ENCODE measurements at regions of chr19 and their contacts with region 1.

Region 1: DNA sequence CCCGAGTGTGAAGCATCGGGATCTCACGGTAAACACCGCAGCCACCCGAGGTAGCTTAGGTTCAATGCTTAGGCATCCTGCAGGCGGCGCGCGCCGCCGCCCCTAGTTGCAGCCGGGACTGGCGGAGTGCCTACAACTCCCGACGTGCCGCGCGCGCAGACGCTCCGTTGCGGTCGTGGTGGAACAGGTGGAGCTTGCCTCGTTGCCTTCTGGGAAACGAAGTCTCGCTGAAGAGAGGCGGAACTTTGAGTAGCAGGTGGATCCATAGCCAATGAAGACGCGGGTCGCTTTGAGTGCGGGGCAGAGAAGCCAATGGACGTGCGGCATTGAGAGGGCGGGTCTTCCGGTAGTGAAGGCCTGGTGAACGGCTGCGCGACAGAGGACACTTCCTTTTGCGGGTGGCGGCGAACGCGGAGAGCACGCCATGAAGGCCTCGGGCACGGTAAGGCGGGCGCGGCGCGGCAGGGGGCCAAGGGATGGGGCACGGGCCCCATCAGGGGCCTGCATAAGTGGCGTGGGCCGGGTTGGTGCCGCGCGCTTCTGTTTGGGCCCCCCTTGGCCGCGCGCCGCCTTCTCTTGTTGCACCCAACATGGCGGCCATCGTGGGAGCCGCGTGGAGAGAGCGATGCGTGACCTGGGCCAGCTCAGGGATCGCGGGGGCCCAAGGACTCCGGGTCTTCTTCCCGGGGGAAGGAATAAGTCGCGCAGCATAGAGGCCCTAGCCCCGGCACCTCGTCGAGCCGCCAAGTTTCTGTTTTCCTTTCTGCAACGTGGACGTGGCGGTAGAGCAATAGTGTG is at the start of gene RPL18A:
- DNase-seq: peak; percentile 99
- ATAC-seq: peak; percentile 93
- H3K4me3 ChIP-seq: peak within 1 kb of the TSS; percentile 92
- H3K27ac ChIP-seq: peak within 1 kb of the TSS; percentile 90
- H3K4me1 ChIP-seq: peaks cover 12% of the 10 kb centered on the region
- H3K27me3 ChIP-seq: no peaks in the 10 kb centered on the region
- CTCF ChIP-seq: peak; percentile 93 to 99 (median 98); a peak in 5 of 6 replicates
- EP300 ChIP-seq: no peak
- POLR2A ChIP-seq: peak; percentile 100
- RAD21 ChIP-seq: peak; percentile 82
- polyA plus RNA-seq, gene RPL18A: 1,658 to 1,675 TPM

Region 2: GRCh38 chr19:17703824-17704463 is 155.8 kb before region 1 on chr19:
- CTCF ChIA-PET with region 1: interaction called, 43 read pairs
- POLR2A ChIA-PET with region 1: no interaction called
- RAD21 ChIA-PET with region 1: interaction called, 8 read pairs
- SMC1A ChIA-PET with region 1: interaction called, 19 read pairs
- in situ Hi-C with region 1: loop called (anchors 5 kb)
- intact Hi-C with region 1: loop called (anchors 1 kb)
- DNase-seq: no peak
- ATAC-seq: peak; percentile 93
- H3K4me3 ChIP-seq: no peak overlapping the region
- H3K27ac ChIP-seq: no peak overlapping the region
- H3K4me1 ChIP-seq: no peaks in the 10 kb centered on the region
- H3K27me3 ChIP-seq: no peaks in the 10 kb centered on the region; a peak in 1 of 4 replicates
- CTCF ChIP-seq: peak; percentile 82 to 93 (median 88)
- EP300 ChIP-seq: no peak
- POLR2A ChIP-seq: no peak
- RAD21 ChIP-seq: peak; percentile 80

Region 3: GRCh38 chr19:17775245-17775916 is 84.4 kb before region 1 on chr19:
- CTCF ChIA-PET with region 1: interaction called, 3 read pairs
- POLR2A ChIA-PET with region 1: no interaction called
- RAD21 ChIA-PET with region 1: interaction called, 9 read pairs
- SMC1A ChIA-PET with region 1: interaction called, 5 read pairs
- in situ Hi-C with region 1: no loop called
- intact Hi-C with region 1: loop called (anchors 5 kb)
- DNase-seq: no peak
- ATAC-seq: 0 out of 3 replicates have a peak, but pooled peaks have one; percentile 7
- H3K4me3 ChIP-seq: no peak overlapping the region
- H3K27ac ChIP-seq: peak overlapping the region; percentile 76
- H3K4me1 ChIP-seq: peaks cover 20% of the 10 kb centered on the region
- H3K27me3 ChIP-seq: no peaks in the 10 kb centered on the region
- CTCF ChIP-seq: peak; percentile 48 to 71 (median 64)
- EP300 ChIP-seq: no peak
- POLR2A ChIP-seq: no peak; the same call in 1 of the 2 replicates
- RAD21 ChIP-seq: peak; percentile 60

Region 4: GRCh38 chr19:17826583-17826982 is 33.1 kb before region 1 on chr19:
- CTCF ChIA-PET with region 1: no interaction called
- POLR2A ChIA-PET with region 1: no interaction called
- RAD21 ChIA-PET with region 1: no interaction called
- SMC1A ChIA-PET with region 1: no interaction called
- in situ Hi-C with region 1: no loop called
- intact Hi-C with region 1: no loop called
- DNase-seq: no peak
- ATAC-seq: no peak
- H3K4me3 ChIP-seq: no peak overlapping the region
- H3K27ac ChIP-seq: no peak overlapping the region
- H3K4me1 ChIP-seq: no peaks in the 10 kb centered on the region
- H3K27me3 ChIP-seq: no peaks in the 10 kb centered on the region
- CTCF ChIP-seq: no peak
- EP300 ChIP-seq: no peak
- POLR2A ChIP-seq: no peak
- RAD21 ChIP-seq: no peak

Region 5: DNA sequence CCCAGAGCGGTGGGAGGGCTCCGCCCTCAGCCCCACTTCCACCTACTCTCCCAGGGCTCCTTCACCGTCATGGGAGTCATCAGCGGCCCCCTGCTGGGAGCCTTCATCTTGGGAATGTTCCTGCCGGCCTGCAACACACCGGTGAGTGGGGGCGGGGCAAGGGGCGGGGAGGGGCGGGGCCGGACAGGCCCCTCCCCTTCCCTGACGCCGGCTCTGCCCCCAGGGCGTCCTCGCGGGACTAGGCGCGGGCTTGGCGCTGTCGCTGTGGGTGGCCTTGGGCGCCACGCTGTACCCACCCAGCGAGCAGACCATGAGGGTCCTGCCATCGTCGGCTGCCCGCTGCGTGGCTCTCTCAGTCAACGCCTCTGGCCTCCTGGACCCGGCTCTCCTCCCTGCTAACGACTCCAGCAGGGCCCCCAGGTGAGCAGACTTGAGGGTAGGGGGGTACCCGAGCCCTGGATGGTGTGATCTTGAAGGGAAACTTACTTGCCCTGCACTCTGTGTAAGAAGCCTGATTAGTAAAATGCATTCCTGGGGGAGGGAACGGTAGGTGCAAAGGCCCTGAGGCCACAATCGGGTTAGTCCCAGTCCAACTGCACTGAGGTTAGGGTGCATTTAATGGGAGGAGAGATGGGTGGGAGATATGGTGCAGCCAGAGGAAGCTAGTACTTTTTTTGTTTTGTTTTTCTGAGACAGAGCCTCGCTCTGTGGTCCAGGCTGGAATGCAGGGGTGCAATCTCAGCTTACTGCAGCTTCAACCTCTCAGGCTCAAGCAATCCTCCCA is 24.1 kb after region 1 on chr19:
- CTCF ChIA-PET with region 1: interaction called, 5 read pairs
- POLR2A ChIA-PET with region 1: interaction called, 3 read pairs
- RAD21 ChIA-PET with region 1: interaction called, 10 read pairs
- SMC1A ChIA-PET with region 1: no interaction called
- in situ Hi-C with region 1: no loop called
- intact Hi-C with region 1: no loop called
- DNase-seq: no peak
- ATAC-seq: no peak
- H3K4me3 ChIP-seq: no peak overlapping the region
- H3K27ac ChIP-seq: peak overlapping the region; percentile 50
- H3K4me1 ChIP-seq: peaks cover 32% of the 10 kb centered on the region
- H3K27me3 ChIP-seq: no peaks in the 10 kb centered on the region; a peak in 1 of 4 replicates
- CTCF ChIP-seq: no peak
- EP300 ChIP-seq: no peak
- POLR2A ChIP-seq: no peak
- RAD21 ChIP-seq: no peak

Region 6: GRCh38 chr19:17938092-17938845 is 78.5 kb after region 1 on chr19:
- CTCF ChIA-PET with region 1: interaction called, 251 read pairs
- POLR2A ChIA-PET with region 1: interaction called, 65 read pairs
- RAD21 ChIA-PET with region 1: interaction called, 228 read pairs
- SMC1A ChIA-PET with region 1: interaction called, 137 read pairs
- in situ Hi-C with region 1: no loop called
- intact Hi-C with region 1: no loop called
- DNase-seq: no peak
- ATAC-seq: peak; percentile 99
- H3K4me3 ChIP-seq: no peak overlapping the region
- H3K27ac ChIP-seq: no peak overlapping the region
- H3K4me1 ChIP-seq: no peaks in the 10 kb centered on the region; the same call in 1 of the 2 replicates
- H3K27me3 ChIP-seq: no peaks in the 10 kb centered on the region
- CTCF ChIP-seq: peak; percentile 95 to 98 (median 96)
- EP300 ChIP-seq: no peak
- POLR2A ChIP-seq: no peak
- RAD21 ChIP-seq: peak; percentile 94

Region 7: DNA sequence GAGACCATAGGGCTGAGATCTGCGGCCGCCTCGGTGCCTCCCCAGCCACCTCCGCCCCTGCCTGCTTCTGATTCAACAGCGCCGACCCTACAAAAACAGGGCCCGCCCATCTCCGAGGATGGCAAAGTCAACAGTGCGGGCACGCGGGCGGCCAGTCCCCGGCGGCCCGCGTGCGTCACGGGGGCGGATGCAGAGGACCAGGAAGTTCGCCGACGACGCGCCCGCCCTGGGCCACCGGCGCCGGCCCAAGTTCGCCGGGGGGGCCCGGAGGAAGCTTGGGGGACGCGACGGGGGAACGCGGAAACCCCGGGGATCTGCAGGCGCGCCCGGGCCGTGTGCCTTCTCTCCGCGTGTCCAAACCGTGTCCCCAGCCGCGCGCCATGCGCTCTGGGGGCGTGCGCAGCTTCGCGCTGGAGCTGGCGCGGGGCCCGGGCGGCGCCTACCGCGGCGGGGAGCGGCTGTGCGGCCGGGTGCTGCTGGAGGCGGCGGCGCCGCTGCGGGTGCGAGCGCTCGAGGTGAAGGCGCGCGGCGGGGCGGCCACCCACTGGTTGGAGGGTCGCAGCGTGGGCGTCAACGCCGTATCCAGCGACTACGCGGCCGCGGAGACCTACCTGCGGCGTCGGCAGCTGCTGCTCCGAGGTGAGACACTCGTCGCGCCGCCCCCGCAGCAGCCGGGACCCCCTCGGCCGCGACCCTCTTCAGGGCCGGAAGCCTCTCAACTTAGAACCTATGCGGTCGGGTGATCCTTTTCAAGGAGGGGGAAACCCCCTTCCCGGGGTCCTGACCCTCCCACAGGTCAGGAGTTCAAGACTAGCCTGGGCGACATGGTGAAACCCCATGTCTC is 141.4 kb after region 1 on chr19:
- CTCF ChIA-PET with region 1: interaction called, 6 read pairs
- POLR2A ChIA-PET with region 1: interaction called, 6 read pairs
- RAD21 ChIA-PET with region 1: interaction called, 9 read pairs
- SMC1A ChIA-PET with region 1: interaction called, 3 read pairs
- in situ Hi-C with region 1: no loop called
- intact Hi-C with region 1: loop called (anchors 2 kb)
- DNase-seq: no peak
- ATAC-seq: peak; percentile 84
- H3K4me3 ChIP-seq: peak overlapping the region; percentile 75
- H3K27ac ChIP-seq: peak overlapping the region; percentile 62
- H3K4me1 ChIP-seq: peaks cover 5% of the 10 kb centered on the region; the same call in 1 of the 2 replicates
- H3K27me3 ChIP-seq: no peaks in the 10 kb centered on the region
- CTCF ChIP-seq: no peak
- EP300 ChIP-seq: no peak
- POLR2A ChIP-seq: peak; percentile 81
- RAD21 ChIP-seq: no peak

Region 8: DNA sequence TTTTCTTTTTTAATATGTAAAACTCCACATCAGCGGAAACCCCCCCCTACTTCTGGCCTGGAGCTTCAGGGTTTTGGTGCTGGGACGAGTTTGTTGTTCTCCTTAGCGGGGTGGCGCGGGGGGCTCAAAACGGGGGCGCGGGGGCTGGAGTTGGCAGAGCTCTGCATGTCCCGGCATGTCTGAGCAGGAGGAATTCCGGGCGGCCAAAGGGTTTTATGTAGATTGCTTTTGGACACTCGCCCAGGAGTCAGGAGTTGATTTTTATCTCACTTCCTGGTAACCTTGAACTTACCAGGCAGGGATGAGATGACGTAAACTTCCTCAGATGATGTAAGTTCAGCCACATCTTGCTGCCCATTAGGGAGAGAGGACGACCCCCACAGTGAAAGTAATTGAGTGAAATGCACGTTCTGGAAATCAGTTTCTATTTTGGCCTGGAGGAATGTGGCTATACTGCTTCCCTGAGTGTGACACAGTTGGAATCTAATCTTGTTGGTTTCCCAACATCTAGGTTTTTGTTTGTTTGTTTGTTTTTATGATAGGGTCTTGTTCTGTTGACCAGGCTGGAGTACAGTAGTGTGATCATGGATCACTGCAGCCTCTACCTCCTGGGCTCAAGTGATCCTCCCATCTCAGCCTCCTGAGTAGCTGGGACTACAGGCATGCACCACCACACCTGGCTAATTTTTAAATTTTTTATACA is 505.2 kb after region 1 on chr19:
- CTCF ChIA-PET with region 1: no interaction called
- POLR2A ChIA-PET with region 1: no interaction called
- RAD21 ChIA-PET with region 1: no interaction called
- SMC1A ChIA-PET with region 1: no interaction called
- in situ Hi-C with region 1: no loop called
- intact Hi-C with region 1: no loop called
- DNase-seq: no peak
- ATAC-seq: no peak
- H3K4me3 ChIP-seq: no peak overlapping the region
- H3K27ac ChIP-seq: no peak overlapping the region; the same call in 1 of the 2 replicates
- H3K4me1 ChIP-seq: peaks cover 11% of the 10 kb centered on the region
- H3K27me3 ChIP-seq: no peaks in the 10 kb centered on the region
- CTCF ChIP-seq: no peak
- EP300 ChIP-seq: no peak
- POLR2A ChIP-seq: no peak
- RAD21 ChIP-seq: no peak